ENCODE measurements at regions of chr2 and their contacts with region 1.

Region 1: GRCh38 chr2:155377266-155377680 is 678.8 kb downstream of the KCNJ3 start:
- DNase-seq: no peak
- ATAC-seq: no peak
- H3K4me3 ChIP-seq: no peak overlapping the region
- H3K27ac ChIP-seq: no peak overlapping the region
- H3K4me1 ChIP-seq: no peaks in the 10 kb centered on the region
- H3K27me3 ChIP-seq: no peaks in the 10 kb centered on the region
- CTCF ChIP-seq: no peak
- POLR2A ChIP-seq: no peak

Region 2: GRCh38 chr2:156589381-156590079 is 1212.3 kb after region 1 on chr2:
- in situ Hi-C with region 1: no loop called
- intact Hi-C with region 1: loop called (anchors 10 kb)
- DNase-seq: no peak
- ATAC-seq: peak in 1 of 2 donors; percentile 64
- H3K4me3 ChIP-seq: no peak overlapping the region
- H3K27ac ChIP-seq: no peak overlapping the region
- H3K4me1 ChIP-seq: no peaks in the 10 kb centered on the region
- H3K27me3 ChIP-seq: no peaks in the 10 kb centered on the region
- CTCF ChIP-seq: peak in 4 of 5 experiments; percentile 14 to 55 (median 48)
- POLR2A ChIP-seq: no peak

Region 3: DNA sequence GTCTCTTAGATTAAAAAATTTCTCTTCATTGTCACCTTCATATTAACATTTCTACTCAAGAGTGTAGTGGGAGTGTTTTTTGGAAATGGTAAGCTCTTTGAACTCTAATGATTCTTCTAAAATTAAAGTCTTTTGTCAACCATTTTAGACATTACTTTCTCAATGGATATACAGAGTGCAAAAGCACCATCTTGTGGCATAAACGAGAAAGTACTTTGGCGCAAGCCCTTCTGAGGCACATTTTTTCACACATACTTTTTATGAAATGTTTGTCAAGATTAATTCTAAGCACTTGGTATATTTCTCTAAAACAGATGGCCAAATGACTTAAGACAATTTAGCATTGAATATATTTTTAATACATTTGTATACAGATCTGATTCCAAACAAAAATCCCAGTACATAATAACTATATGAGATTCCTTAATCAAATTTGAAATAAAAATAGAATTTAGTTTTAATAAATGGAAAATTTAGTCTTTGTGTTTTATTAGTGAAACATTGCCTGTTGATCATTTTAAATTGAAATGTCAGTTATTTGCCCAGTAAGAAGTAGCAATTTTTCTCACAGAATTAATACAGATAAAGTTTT is 1816.9 kb after region 1 on chr2:
- in situ Hi-C with region 1: loop called in 1 of 4 experiments (anchors 10 kb)
- intact Hi-C with region 1: loop called (anchors 5 kb)
- DNase-seq: no peak
- ATAC-seq: no peak
- H3K4me3 ChIP-seq: no peak overlapping the region
- H3K27ac ChIP-seq: no peak overlapping the region
- H3K4me1 ChIP-seq: no peaks in the 10 kb centered on the region
- H3K27me3 ChIP-seq: no peaks in the 10 kb centered on the region
- CTCF ChIP-seq: peak in 3 of 5 experiments; percentile 44 to 49 (median 47)
- POLR2A ChIP-seq: no peak

Measured in gastrocnemius medialis (tissue), 4 donors.